HCT116 (cell line): ENCODE measurements at regions of chr16 and their contacts with region 1.

Region 1: GRCh38 chr16:1054660-1055556 is 17.6 kb upstream of the SSTR5 start:
- DNase-seq: peak; percentile 37
- ATAC-seq: peak; percentile 81
- H3K4me3 ChIP-seq: no peak overlapping the region
- H3K27ac ChIP-seq: no peak overlapping the region
- H3K4me1 ChIP-seq: peaks cover 6 to 22% of the 10 kb centered on the region in 2 experiments; a peak in 3 of 4 replicates
- H3K27me3 ChIP-seq: no peaks in the 10 kb centered on the region
- CTCF ChIP-seq: peak; percentile 88 to 91 (median 89)
- POLR2A ChIP-seq: no peak
- RAD21 ChIP-seq: peak; percentile 98

Region 2: DNA sequence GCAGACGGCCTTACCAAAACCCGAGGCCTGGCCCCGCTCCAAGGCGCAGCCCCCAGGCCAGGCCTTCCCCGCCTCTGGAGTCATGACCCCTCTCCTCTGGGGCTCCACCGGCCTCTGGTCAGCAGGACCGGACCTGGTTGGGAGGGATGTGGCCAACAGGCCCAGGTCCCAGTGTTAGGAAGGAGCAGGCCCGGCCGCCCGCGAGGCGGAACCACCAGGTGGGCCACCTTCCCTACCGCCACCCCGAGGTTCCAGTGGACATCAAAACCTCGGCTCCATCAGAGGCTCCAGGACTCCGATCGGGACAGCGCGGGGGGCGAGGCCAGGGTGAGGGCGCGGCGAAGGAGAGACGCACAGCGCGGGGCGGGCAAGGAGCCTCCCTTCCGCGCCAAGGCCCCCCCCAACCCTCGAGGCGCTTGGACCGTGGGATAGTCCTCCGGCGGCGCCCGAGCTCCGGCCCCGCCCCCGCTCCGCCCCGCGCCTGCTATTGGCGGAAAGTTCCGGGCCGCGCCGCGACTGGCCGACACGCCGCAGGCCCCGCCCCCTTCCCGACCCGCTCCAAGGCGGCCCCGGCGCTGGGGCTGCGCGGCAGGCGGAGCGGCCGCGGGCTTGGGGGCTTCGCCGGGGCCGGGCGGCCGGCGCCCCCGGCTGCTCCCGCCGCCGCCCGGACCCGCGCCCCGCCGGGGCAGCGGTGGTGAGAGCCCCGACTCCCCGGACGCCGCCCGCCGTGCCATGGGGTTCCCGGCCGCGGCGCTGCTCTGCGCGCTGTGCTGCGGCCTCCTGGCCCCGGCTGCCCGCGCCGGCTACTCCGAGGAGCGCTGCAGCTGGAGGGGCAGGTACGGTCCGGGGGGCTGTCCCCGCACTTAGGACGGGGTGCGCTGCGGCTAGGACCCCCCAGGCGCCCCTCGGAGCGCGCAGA is 340.1 kb before region 1 on chr16 and contains the start of gene METRN:
- CTCF ChIA-PET with region 1: interaction called, 18 read pairs
- POLR2A ChIA-PET with region 1: no interaction called
- RAD21 ChIA-PET with region 1: no interaction called
- intact Hi-C with region 1: loop called (anchors 5 kb)
- DNase-seq: no peak
- ATAC-seq: peak; percentile 64
- H3K4me3 ChIP-seq: peak within 1 kb of the TSS; percentile 59 to 74
- H3K27ac ChIP-seq: peak within 1 kb of the TSS; percentile 92
- H3K4me1 ChIP-seq: peaks cover 37 to 75% of the 10 kb centered on the region in 2 experiments
- H3K27me3 ChIP-seq: no peaks in the 10 kb centered on the region
- CTCF ChIP-seq: no peak
- POLR2A ChIP-seq: no peak
- RAD21 ChIP-seq: no peak
- total RNA-seq, gene METRN: 193 TPM

Region 3: DNA sequence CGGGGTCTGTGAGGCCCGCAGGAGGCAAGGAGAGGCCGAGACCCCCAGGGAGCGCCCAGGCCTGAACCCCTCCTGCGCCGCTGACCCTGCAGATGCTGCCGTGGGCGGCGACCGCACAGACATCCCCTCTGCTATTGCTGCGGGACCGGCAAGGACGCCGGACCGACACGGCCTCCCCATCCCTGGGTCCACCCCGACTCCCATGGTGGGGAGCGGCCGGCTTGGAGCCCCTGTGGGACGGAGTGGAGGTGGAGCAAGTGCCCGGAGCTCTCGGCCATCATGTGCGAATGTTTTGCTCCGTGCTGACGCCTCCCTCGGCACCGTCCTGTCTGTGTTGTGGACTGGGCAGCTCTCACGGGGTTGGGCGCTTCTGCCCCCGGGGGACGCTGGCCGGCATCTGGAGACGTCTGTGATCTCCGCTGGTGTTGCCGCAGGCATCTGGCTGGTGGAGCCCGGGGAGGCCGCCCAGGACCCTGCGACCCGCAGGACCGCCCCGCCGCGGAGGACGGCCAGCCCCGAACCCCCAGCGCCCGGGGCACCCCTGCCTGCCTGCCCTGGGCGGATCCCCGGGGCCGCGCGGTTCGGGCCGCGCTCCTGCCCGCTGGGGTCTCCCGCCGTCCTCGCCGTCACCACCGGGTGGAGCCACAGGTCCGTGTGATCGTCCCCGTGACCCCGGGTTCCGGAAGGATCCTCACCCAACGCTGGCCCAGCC is 241.5 kb before region 1 on chr16:
- CTCF ChIA-PET with region 1: interaction called, 3 read pairs
- POLR2A ChIA-PET with region 1: no interaction called
- RAD21 ChIA-PET with region 1: no interaction called
- intact Hi-C with region 1: loop called (anchors 1 kb)
- DNase-seq: no peak
- ATAC-seq: peak; percentile 75
- H3K4me3 ChIP-seq: no peak overlapping the region
- H3K27ac ChIP-seq: 0 out of 2 replicates have a peak overlapping the region, but pooled peaks have one; percentile 17
- H3K4me1 ChIP-seq: peaks cover 24 to 35% of the 10 kb centered on the region in 2 experiments
- H3K27me3 ChIP-seq: no peaks in the 10 kb centered on the region
- CTCF ChIP-seq: peak in 2 of 3 experiments; percentile 51 to 62; a peak in 5 of 6 replicates
- POLR2A ChIP-seq: no peak
- RAD21 ChIP-seq: peak; percentile 82

Region 4: DNA sequence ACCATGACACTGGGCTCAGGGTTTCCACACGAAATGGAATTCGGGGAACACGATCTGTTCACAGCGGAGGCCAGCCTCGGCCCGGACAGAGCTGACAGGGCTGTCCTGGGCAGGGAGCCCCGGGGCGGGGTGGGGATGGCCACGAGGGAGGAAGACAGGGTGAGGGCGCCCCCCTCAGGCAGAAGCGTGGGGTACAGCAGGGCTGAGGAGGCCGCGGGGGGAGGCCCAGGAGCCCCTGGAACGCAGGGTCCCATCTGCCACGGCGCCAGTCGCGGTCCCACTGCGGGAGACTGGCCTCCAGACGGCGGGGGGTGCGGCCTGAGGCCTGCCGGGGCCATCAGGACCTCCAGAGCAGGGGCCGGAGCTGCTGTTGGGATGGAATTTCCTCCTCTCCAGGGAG is 160.1 kb before region 1 on chr16:
- CTCF ChIA-PET with region 1: no interaction called
- POLR2A ChIA-PET with region 1: no interaction called
- RAD21 ChIA-PET with region 1: no interaction called
- intact Hi-C with region 1: loop called (anchors 10 kb)
- DNase-seq: no peak
- ATAC-seq: peak; percentile 26; the same call in 1 of the 2 replicates
- H3K4me3 ChIP-seq: no peak overlapping the region
- H3K27ac ChIP-seq: no peak overlapping the region
- H3K4me1 ChIP-seq: peaks cover 0 to 3% of the 10 kb centered on the region in 2 experiments; a peak in 1 of 4 replicates
- H3K27me3 ChIP-seq: no peaks in the 10 kb centered on the region
- CTCF ChIP-seq: peak in 2 of 3 experiments; percentile 15 to 41; a peak in 3 of 6 replicates
- POLR2A ChIP-seq: no peak
- RAD21 ChIP-seq: peak; percentile 24; the same call in 1 of the 2 replicates

Region 5: GRCh38 chr16:1089822-1090619 is 35.1 kb after region 1 on chr16:
- CTCF ChIA-PET with region 1: interaction called, 6 read pairs
- POLR2A ChIA-PET with region 1: interaction called, 4 read pairs
- RAD21 ChIA-PET with region 1: interaction called, 3 to 4 read pairs
- intact Hi-C with region 1: loop called (anchors 2 kb)
- DNase-seq: no peak
- ATAC-seq: peak; percentile 67
- H3K4me3 ChIP-seq: peak overlapping the region; percentile 68 to 78
- H3K27ac ChIP-seq: peak overlapping the region; percentile 100
- H3K4me1 ChIP-seq: peaks cover 61 to 95% of the 10 kb centered on the region in 2 experiments
- H3K27me3 ChIP-seq: no peaks in the 10 kb centered on the region
- CTCF ChIP-seq: peak in 2 of 3 experiments; percentile 25 to 30; a peak in 2 of 6 replicates
- POLR2A ChIP-seq: no peak
- RAD21 ChIP-seq: no peak

Region 6: GRCh38 chr16:1105888-1106620 is 51.1 kb after region 1 on chr16:
- CTCF ChIA-PET with region 1: no interaction called
- POLR2A ChIA-PET with region 1: interaction called, 6 read pairs
- RAD21 ChIA-PET with region 1: interaction called in 1 of 2 experiments, 7 read pairs
- intact Hi-C with region 1: loop called (anchors 1 kb)
- DNase-seq: no peak
- ATAC-seq: peak; percentile 84
- H3K4me3 ChIP-seq: no peak overlapping the region
- H3K27ac ChIP-seq: no peak overlapping the region
- H3K4me1 ChIP-seq: peaks cover 0 to 20% of the 10 kb centered on the region in 2 experiments; a peak in 2 of 4 replicates
- H3K27me3 ChIP-seq: no peaks in the 10 kb centered on the region
- CTCF ChIP-seq: peak; percentile 77 to 88 (median 85)
- POLR2A ChIP-seq: no peak
- RAD21 ChIP-seq: peak; percentile 94

Region 7: DNA sequence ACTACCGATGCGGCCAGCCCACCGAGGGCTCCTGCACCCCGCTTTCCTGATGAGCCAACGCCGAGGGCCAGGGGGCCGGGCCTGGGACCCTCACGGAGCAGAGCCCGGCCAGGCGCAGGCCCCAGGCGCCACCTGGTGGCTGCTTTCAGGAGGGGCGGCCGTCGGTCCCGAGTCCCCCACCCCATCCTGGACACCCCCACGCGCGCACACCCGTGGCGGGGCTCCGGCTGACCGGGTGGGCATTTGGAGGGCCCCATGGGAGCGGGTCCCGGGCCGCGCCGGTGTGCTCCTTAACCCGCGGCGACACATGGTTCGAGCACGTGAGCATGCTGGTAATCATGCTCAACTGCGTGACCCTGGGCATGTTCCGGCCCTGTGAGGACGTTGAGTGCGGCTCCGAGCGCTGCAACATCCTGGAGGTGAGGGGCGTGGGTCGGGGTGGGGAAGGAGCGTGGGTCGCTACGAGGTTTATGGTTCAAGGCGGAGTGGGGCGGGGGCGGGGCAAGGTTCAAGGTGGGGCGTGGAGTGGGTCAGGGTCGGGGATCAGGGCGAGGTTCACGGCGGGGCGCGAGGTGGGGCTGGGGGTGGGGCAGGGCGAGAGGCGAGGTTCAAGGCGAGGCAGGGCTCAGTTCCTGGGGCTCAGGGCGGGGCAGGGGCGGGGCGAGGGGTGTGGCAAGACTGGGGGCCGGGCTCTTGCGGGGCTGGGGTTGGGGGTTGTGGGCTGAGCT is 139.9 kb after region 1 on chr16:
- CTCF ChIA-PET with region 1: interaction called, 3 read pairs
- POLR2A ChIA-PET with region 1: interaction called, 4 read pairs
- RAD21 ChIA-PET with region 1: interaction called in 1 of 2 experiments, 3 read pairs
- intact Hi-C with region 1: loop called (anchors 5 kb)
- DNase-seq: no peak
- ATAC-seq: peak; percentile 48
- H3K4me3 ChIP-seq: peak overlapping the region; percentile 26 to 58
- H3K27ac ChIP-seq: peak overlapping the region; percentile 72; the same call in 1 of the 2 replicates
- H3K4me1 ChIP-seq: peaks cover 22 to 49% of the 10 kb centered on the region in 2 experiments
- H3K27me3 ChIP-seq: no peaks in the 10 kb centered on the region
- CTCF ChIP-seq: peak; percentile 74 to 86 (median 84); a peak in 5 of 6 replicates
- POLR2A ChIP-seq: no peak
- RAD21 ChIP-seq: peak; percentile 91

Region 8: GRCh38 chr16:1363501-1364041 is 308.7 kb after region 1 on chr16:
- CTCF ChIA-PET with region 1: no interaction called
- POLR2A ChIA-PET with region 1: no interaction called
- RAD21 ChIA-PET with region 1: no interaction called
- intact Hi-C with region 1: no loop called
- DNase-seq: peak; percentile 23
- ATAC-seq: peak; percentile 96
- H3K4me3 ChIP-seq: no peak overlapping the region
- H3K27ac ChIP-seq: no peak overlapping the region
- H3K4me1 ChIP-seq: peaks cover 4 to 15% of the 10 kb centered on the region in 2 experiments
- H3K27me3 ChIP-seq: no peaks in the 10 kb centered on the region
- CTCF ChIP-seq: peak; percentile 70 to 93 (median 88)
- POLR2A ChIP-seq: no peak
- RAD21 ChIP-seq: peak; percentile 74